ENCODE measurements at regions of chr1 and their contacts with region 1.

Region 1: DNA sequence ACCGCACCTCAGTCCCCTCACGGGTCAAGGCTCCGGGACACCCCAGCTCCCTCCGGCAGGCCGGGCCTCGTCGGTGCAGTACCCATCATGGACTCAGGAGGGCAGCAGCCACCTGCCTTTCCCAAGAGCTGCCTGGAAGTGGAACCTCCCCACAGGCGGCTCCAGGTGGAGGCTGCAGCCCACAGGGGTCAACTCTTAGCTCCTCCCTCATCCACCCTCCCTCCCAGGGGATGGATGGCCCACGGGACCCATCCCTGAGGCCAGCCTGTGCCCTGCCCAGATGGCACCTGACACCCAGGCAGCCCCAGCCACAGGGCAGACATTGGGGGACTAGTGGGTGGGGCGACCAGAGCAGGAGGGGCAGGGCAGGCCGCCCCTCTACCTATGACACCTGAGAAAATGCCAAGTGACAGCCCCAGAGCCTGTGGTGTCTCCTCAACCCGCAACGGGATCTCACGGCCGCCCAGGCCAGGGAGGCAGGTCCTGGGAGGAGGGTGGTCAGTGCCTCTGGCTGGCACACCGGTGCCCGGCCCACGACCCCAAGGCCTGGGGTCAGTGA is 1.2 kb upstream of the ARHGEF16 start:
- DNase-seq: peak; percentile 56
- H3K4me3 ChIP-seq: no peak overlapping the region
- H3K27ac ChIP-seq: no peak overlapping the region
- H3K4me1 ChIP-seq: no peaks in the 10 kb centered on the region
- H3K27me3 ChIP-seq: peaks cover 0 to 3% of the 10 kb centered on the region in 2 experiments
- CTCF ChIP-seq: peak; percentile 82 to 94
- POLR2A ChIP-seq: no peak

Region 2: DNA sequence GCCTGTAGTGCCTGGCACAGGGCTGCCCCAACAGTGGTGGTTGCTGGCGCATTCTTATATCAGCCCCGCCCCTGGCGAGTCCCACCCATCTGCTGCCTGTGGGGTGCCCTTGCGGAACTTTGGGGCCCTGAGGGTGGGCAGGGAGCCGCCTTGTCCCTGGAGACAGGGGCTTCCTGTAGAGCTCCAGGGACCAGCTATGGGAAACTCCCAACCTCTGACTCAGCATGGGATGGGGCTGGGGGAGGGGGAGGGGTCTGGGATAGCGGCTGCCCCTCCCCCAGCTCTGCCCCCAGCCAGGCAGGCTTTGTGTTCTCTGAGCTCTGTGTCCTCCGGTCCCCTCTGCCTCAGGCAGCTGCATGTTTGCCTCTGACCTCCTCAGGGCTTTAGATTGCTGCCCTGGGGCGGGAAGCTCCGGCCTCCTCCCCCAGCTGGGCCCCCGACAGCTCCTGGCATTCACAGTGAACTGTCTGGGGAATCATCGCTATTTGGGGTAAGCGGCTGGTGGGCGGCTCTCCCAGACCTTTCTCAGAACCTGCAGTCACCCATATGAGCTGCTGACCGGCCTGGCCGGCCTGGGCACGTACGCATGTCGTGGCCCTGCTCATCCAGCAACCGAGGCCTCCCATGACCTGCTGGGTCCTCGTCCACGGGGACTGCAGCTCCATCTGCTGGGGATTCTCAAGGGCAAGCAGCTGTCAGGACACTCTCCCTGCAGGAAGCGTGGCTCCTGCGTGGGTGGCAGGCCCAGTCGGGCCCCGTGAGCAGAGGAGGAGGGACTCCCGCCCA is 18.2 kb after region 1 on chr1:
- CTCF ChIA-PET with region 1: interaction called, 82 read pairs
- POLR2A ChIA-PET with region 1: no interaction called
- dilution Hi-C with region 1: no loop called
- intact Hi-C with region 1: loop called (anchors 1 kb)
- DNase-seq: peak; percentile 35
- H3K4me3 ChIP-seq: no peak overlapping the region
- H3K27ac ChIP-seq: no peak overlapping the region
- H3K4me1 ChIP-seq: peaks cover 4% of the 10 kb centered on the region
- H3K27me3 ChIP-seq: no peaks in the 10 kb centered on the region
- CTCF ChIP-seq: peak; percentile 16 to 47
- POLR2A ChIP-seq: no peak

Region 3: DNA sequence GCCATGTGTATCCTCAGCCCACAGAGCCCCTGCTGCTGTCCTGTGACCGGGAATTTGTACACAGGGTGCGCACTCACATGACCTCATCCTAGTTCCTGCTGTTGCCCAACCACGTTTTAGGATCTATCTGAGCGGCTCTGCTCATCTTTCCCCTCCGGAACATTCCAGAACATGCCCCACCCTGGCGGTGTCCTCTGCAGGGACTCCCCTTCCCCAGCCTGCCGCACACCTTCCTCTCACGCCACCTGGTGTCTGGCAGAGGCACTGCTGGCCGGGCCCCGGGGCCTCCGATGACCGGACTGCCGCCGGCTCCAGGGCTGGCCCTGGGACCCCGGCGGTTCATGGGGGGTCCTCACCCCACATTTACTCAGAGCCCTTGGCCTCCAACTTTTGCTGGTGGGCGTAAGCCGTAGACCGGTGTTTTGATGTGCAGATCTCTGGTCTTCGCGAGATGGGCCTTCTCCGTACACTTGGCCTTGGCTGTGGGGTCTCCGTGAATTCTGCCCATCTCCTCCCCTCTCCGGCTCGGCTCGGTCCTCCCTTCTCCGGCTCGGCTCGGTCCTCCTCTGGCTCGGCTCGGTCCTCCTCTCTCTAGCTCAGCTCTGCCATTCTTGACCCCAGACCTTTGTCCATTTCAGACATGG is 30.6 kb after region 1 on chr1:
- CTCF ChIA-PET with region 1: interaction called, 75 read pairs
- POLR2A ChIA-PET with region 1: no interaction called
- dilution Hi-C with region 1: no loop called
- intact Hi-C with region 1: loop called (anchors 1 kb)
- DNase-seq: peak; percentile 25
- H3K4me3 ChIP-seq: no peak overlapping the region
- H3K27ac ChIP-seq: no peak overlapping the region
- H3K4me1 ChIP-seq: no peaks in the 10 kb centered on the region
- H3K27me3 ChIP-seq: no peaks in the 10 kb centered on the region
- CTCF ChIP-seq: peak; percentile 76 to 91
- POLR2A ChIP-seq: no peak

Region 4: GRCh38 chr1:3530926-3531818 is 77.9 kb after region 1 on chr1:
- CTCF ChIA-PET with region 1: interaction called, 12 read pairs
- POLR2A ChIA-PET with region 1: no interaction called
- dilution Hi-C with region 1: no loop called
- intact Hi-C with region 1: no loop called
- DNase-seq: peak; percentile 54
- H3K4me3 ChIP-seq: peak overlapping the region; percentile 50 to 89 (median 77)
- H3K27ac ChIP-seq: peak overlapping the region; percentile 12
- H3K4me1 ChIP-seq: peaks cover 11% of the 10 kb centered on the region
- H3K27me3 ChIP-seq: no peaks in the 10 kb centered on the region
- CTCF ChIP-seq: no peak
- POLR2A ChIP-seq: peak; percentile 85

Region 5: GRCh38 chr1:3630161-3630611 is 176.9 kb after region 1 on chr1:
- CTCF ChIA-PET with region 1: interaction called, 12 read pairs
- POLR2A ChIA-PET with region 1: no interaction called
- dilution Hi-C with region 1: no loop called
- intact Hi-C with region 1: no loop called
- DNase-seq: no peak
- H3K4me3 ChIP-seq: no peak overlapping the region
- H3K27ac ChIP-seq: no peak overlapping the region
- H3K4me1 ChIP-seq: peaks cover 7% of the 10 kb centered on the region
- H3K27me3 ChIP-seq: no peaks in the 10 kb centered on the region
- CTCF ChIP-seq: no peak
- POLR2A ChIP-seq: no peak

Region 6: DNA sequence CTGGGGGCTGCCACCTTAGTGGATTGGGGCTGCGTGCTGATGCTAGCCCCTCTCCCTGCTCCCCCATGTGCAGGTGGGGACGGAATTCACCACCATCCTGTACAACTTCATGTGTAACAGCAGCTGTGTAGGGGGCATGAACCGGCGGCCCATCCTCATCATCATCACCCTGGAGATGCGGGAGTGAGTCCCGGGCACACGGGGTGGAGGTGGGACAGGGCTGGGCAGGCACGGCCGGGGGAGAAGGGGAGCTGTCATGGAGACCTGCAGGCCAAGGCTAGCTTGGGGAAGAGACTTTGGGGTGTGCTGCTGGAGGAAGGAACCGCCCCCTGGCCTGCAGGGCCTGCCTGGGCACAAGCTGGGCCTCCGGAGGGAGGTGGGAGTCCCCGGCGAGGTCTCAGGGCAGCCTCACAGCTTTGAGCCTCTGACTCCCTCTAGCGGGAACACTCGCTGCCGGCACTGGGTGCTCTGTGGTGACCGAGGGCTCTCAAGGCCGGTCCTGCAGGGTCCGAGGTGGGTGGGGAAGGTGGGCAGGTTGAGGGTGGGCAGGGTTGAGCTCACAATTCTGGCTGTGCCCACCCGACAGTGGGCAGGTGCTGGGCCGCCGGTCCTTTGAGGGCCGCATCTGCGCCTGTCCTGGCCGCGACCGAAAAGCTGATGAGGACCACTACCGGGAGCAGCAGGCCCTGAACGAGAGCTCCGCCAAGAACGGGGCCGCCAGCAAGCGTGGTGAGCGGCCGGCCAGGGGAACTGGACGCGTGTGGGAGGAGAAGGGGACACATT is 274.0 kb after region 1 on chr1:
- CTCF ChIA-PET with region 1: interaction called, 51 read pairs
- POLR2A ChIA-PET with region 1: no interaction called
- dilution Hi-C with region 1: no loop called
- intact Hi-C with region 1: loop called (anchors 1 kb)
- DNase-seq: no peak
- H3K4me3 ChIP-seq: no peak overlapping the region
- H3K27ac ChIP-seq: no peak overlapping the region
- H3K4me1 ChIP-seq: no peaks in the 10 kb centered on the region
- H3K27me3 ChIP-seq: no peaks in the 10 kb centered on the region
- CTCF ChIP-seq: peak; percentile 31 to 54
- POLR2A ChIP-seq: no peak

Measured in endothelial cell of umbilical vein (primary cell).